ENCODE measurements at regions of chr2 and their contacts with region 1.

Region 1: DNA sequence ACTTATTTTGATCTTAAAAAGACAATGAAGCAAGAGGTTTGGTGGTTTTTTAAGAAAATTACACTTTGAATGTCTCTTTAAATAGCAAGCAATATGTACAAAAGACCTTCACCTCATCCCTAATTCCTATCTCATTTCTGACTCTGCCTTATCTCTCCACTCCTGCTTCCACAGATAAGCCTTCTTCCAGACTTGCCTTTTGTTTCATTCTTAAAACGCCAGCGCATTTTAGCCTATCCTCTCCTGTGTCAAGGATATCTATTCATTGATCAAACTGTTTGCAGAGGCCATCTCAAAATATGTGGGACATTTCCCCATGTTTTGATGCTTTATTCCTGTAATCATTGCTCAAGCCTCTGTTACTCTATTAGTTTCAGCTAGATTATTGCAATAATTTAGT is 562.5 kb downstream of the PARD3B start:
- DNase-seq: no peak
- ATAC-seq: no peak
- H3K4me3 ChIP-seq: no peak overlapping the region
- H3K4me3 Mint-ChIP-seq: no peak overlapping the region
- H3K27ac ChIP-seq: no peak overlapping the region
- H3K27ac Mint-ChIP-seq: no peak overlapping the region
- H3K4me1 ChIP-seq: no peaks in the 10 kb centered on the region
- H3K4me1 Mint-ChIP-seq: no peaks in the 10 kb centered on the region
- H3K27me3 ChIP-seq: no peaks in the 10 kb centered on the region
- H3K27me3 Mint-ChIP-seq: no peaks in the 10 kb centered on the region
- CTCF ChIP-seq: no peak

Region 2: GRCh38 chr2:205086662-205087061 is 21.1 kb before region 1 on chr2:
- CTCF ChIA-PET with region 1: no interaction called
- POLR2A ChIA-PET with region 1: no interaction called
- intact Hi-C with region 1: loop called in 1 of 2 experiments (anchors 2 kb)
- DNase-seq: no peak
- ATAC-seq: no peak
- H3K4me3 ChIP-seq: no peak overlapping the region
- H3K4me3 Mint-ChIP-seq: no peak overlapping the region
- H3K27ac ChIP-seq: no peak overlapping the region
- H3K27ac Mint-ChIP-seq: no peak overlapping the region
- H3K4me1 ChIP-seq: no peaks in the 10 kb centered on the region
- H3K4me1 Mint-ChIP-seq: peaks cover 36% of the 10 kb centered on the region
- H3K27me3 ChIP-seq: no peaks in the 10 kb centered on the region
- H3K27me3 Mint-ChIP-seq: no peaks in the 10 kb centered on the region
- CTCF ChIP-seq: no peak

Region 3: DNA sequence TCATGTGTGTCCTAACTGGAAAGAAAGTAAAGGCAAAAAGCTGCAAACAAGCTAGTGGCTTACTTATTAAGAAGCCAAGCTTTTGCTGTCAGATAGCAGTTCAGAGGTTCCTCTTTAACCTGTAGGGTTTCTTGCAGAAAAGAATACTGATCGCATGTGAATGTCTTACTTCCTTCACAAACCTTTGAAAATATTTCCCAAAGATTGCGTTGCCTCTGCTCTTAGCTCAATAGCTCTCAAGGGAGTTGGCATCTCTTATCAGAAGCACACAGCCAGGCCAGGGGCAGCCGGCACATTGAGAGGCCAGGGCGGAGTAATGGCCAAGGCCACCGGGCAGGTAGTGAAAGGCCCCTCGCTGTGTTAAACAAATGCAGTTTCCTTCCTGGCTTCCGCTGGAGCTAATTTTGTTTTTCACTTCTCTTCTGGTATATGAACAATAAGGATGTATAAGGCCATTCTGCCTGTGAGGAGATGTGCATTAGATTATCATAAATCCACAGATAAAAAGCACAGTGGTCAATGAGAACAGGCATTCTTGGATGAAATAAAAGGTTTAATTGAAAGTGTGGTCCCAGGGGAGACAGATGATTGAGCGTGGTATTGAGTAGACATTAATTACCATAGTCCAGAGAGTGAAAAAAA is 32.1 kb after region 1 on chr2:
- CTCF ChIA-PET with region 1: no interaction called
- POLR2A ChIA-PET with region 1: no interaction called
- intact Hi-C with region 1: no loop called
- DNase-seq: no peak
- ATAC-seq: no peak
- H3K4me3 ChIP-seq: no peak overlapping the region
- H3K4me3 Mint-ChIP-seq: no peak overlapping the region
- H3K27ac ChIP-seq: no peak overlapping the region
- H3K27ac Mint-ChIP-seq: no peak overlapping the region
- H3K4me1 ChIP-seq: no peaks in the 10 kb centered on the region
- H3K4me1 Mint-ChIP-seq: peaks cover 9% of the 10 kb centered on the region
- H3K27me3 ChIP-seq: no peaks in the 10 kb centered on the region
- H3K27me3 Mint-ChIP-seq: no peaks in the 10 kb centered on the region
- CTCF ChIP-seq: no peak

Measured in CD4-positive, alpha-beta T cell (primary cell).